Activated CD8-positive, alpha-beta T cell treated with anti-CD3 and anti-CD28 coated beads for 36 hours (primary cell): ENCODE measurements at regions of chr9 and their contacts with region 1.

Region 1: DNA sequence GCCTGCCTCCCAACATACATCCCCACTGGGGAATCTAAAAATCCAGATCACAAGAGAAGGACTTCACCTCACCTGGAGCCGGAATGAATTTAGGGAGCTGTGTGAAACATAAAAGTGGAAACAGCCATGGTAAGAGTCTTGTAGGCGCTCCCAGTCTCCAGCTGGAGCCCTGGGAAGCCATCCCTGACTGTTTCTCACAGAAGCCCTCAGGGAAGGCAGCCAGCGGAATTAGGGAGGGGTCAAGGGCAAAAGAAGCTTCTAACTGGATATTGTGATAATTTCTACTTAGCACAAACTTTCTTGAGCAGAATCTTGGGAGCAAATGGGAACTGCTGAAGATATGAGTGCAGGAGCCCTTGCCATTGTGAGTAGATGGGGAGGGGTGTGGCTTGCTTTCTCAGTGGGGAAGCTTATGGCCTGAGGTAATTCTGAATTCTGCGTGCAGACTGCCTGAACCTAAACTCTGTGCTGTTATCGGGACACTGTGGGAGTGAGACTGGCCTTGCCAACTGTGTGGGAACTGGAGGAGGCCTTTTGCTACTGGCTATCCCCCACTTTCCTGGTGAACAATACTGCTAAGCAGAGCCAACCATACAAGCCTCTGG is 174.4 kb upstream of the SMC2 start:
- DNase-seq: no peak
- ATAC-seq: no peak
- H3K4me3 Mint-ChIP-seq: no peak overlapping the region
- H3K27ac Mint-ChIP-seq: no peak overlapping the region
- H3K4me1 Mint-ChIP-seq: no peaks in the 10 kb centered on the region
- H3K27me3 Mint-ChIP-seq: peaks cover 4% of the 10 kb centered on the region
- CTCF ChIP-seq: no peak

Region 2: DNA sequence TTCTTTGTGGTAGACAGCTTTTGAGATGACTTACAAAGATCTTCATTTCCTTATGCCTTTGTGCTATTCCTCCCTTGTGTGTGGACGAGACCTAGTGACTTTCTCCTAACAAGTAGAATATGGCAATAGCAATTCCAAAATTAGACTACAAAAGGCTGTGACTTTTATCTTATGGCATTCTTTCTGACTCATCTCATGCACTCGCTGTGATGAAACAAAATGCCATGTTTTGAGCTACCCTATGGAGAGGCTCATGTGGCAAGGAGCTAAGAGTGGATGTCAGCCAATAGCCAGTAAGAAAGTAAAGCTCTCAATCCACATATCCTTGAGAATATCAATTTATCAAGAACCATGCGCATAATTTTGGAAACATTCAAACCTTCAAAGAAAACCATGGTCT is 206.1 kb before region 1 on chr9:
- CTCF ChIA-PET with region 1: no interaction called
- POLR2A ChIA-PET with region 1: no interaction called
- intact Hi-C with region 1: no loop called
- DNase-seq: no peak
- ATAC-seq: no peak
- H3K4me3 Mint-ChIP-seq: no peak overlapping the region
- H3K27ac Mint-ChIP-seq: no peak overlapping the region
- H3K4me1 Mint-ChIP-seq: no peaks in the 10 kb centered on the region
- H3K27me3 Mint-ChIP-seq: no peaks in the 10 kb centered on the region
- CTCF ChIP-seq: no peak

Region 3: DNA sequence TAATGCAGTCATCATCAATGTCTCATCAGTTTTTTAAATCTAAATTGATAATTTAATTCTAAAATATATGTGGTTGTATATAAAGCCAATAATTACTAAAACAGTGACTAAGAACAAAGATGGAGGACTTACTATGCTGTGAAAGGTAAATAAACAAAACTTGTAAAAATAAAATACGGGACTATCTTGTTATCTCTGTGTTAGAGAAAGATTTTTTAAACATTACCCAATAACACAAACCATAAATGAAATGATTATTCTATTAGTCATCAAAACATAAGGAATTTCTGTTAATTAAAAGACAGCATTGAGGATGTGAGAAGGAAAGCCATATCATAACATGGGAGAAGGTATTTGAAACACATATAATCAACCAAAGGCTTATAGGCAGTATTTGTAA is 51.8 kb before region 1 on chr9:
- CTCF ChIA-PET with region 1: no interaction called
- POLR2A ChIA-PET with region 1: no interaction called
- intact Hi-C with region 1: loop called (anchors 10 kb)
- DNase-seq: no peak
- ATAC-seq: no peak
- H3K4me3 Mint-ChIP-seq: no peak overlapping the region
- H3K27ac Mint-ChIP-seq: no peak overlapping the region
- H3K4me1 Mint-ChIP-seq: no peaks in the 10 kb centered on the region
- H3K27me3 Mint-ChIP-seq: no peaks in the 10 kb centered on the region
- CTCF ChIP-seq: no peak